CD8-positive, alpha-beta T cell (primary cell): ENCODE measurements at regions of chr1 and their contacts with region 1.

Region 1: DNA sequence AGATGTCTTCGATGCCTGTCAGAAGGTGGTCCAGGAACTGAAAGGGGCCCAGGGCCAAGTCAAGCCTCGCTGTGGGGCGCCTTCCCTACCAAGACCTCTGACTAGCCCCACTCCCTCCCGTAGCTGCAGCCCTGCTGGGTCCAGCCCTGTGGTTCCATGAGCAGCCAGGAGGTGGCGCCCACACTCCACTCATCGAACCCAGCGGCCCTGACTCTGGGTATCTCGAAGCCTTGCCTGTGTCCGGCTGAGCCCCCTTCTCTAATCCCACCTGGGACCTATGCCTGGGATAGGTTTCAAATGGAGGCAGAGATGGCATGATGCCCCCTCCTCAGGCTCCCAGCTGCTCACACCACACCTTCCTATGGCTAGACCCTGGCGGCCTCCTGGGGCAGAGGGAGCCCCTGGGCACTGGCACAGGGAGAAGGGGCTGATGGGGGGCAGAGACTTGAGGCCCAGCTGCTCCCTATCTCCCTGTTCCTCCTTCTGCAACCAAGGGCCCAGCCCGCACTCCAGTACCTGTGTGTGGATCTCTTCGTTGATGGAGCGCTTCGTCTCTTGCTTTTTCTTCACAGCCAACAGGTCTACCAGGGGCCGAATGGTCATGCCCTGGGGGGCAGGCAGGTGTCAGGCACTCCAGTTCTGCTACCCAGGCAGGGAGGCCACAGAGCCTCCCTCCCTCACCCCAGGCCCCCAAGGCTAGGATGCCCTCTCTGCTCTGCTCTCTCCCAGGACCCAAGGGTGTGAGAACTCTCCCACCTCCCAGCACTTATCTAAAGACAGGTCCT is 52.0 kb downstream of the SLC9A1 start:
- DNase-seq: peak; percentile 71 to 90 (median 79)
- ATAC-seq: peak; percentile 97
- H3K4me3 ChIP-seq: no peak overlapping the region
- H3K4me3 Mint-ChIP-seq: no peak overlapping the region
- H3K27ac ChIP-seq: no peak overlapping the region
- H3K27ac Mint-ChIP-seq: no peak overlapping the region
- H3K4me1 ChIP-seq: no peaks in the 10 kb centered on the region
- H3K4me1 Mint-ChIP-seq: peaks cover 8% of the 10 kb centered on the region
- H3K27me3 ChIP-seq: no peaks in the 10 kb centered on the region
- H3K27me3 Mint-ChIP-seq: no peaks in the 10 kb centered on the region
- CTCF ChIP-seq: peak; percentile 89

Region 2: DNA sequence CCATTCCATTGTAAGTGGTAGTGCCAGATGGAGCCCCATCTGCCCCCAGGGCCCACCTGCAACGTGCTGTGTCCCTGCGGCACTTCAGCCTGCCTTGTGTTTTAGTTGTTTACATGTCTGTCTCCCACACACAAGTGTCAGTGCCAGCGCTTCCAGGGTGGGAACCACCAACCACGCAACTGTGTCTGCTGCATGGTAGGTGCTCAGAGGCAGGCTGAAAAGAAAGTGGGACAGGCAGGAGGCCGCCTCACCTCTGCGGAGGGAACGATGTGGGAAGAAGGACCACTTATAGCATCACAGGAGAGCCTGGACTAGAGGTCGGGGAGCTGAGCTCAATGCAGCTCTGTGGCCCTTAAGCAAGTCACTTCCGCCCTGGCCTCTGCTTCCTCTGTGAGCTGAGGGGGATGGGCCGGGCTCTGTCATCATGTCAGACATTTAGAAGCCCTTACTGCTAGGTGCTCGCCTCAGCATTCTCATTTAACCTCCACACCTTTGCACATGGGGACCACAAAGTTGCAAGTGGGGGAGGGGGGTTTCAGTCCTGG is 34.2 kb after region 1 on chr1:
- CTCF ChIA-PET with region 1: interaction called, 19 read pairs
- POLR2A ChIA-PET with region 1: no interaction called
- intact Hi-C with region 1: no loop called
- DNase-seq: peak; percentile 58 to 91 (median 81)
- ATAC-seq: peak; percentile 95
- H3K4me3 ChIP-seq: peak overlapping the region; percentile 41 to 45
- H3K4me3 Mint-ChIP-seq: peak overlapping the region; percentile 87
- H3K27ac ChIP-seq: peak overlapping the region; percentile 72 to 97
- H3K27ac Mint-ChIP-seq: peak overlapping the region; percentile 100
- H3K4me1 ChIP-seq: peaks cover 42% of the 10 kb centered on the region
- H3K4me1 Mint-ChIP-seq: peaks cover 61% of the 10 kb centered on the region
- H3K27me3 ChIP-seq: no peaks in the 10 kb centered on the region
- H3K27me3 Mint-ChIP-seq: no peaks in the 10 kb centered on the region
- CTCF ChIP-seq: no peak

Region 3: DNA sequence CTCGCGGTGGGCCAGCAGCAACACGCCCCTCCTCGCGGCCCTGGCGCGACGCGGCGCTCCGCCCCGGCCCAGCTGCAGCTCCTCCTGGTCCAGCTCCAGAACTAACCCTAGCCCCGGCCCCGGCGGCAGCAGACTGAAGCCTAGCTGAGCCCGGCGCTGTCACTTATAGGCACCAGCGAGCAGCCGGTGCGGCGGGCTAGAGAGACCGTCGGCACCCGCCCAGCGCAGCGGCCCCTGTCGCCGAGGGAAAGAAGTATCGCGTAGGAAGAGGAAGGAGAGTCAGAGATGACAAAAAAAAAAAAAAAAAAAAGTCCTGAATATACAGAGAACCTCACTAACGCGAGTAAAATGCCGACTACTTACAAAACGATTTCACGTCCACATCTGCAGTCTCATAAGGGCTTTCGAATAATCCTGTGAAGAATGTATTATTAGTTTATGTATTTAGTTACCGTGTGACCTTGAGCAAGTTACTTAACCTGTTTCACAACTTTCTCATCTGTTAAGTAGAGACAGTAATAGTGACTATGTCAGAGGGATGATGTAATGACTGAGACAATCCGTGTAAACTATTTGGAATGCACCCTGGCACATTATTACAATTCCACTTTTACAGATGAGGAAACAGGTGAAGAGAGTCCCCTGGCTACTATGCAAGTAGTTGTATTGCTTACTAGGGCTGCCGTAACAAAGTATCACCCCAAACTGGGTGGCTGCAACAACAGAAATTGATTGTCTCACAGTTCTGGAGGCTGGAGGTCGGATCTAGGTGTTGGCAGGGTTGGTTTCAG is 52.3 kb after region 1 on chr1 and contains the start of gene SLC9A1:
- CTCF ChIA-PET with region 1: interaction called, 10 read pairs
- POLR2A ChIA-PET with region 1: interaction called, 4 read pairs
- intact Hi-C with region 1: no loop called
- DNase-seq: peak; percentile 88 to 96 (median 91)
- ATAC-seq: peak; percentile 94
- H3K4me3 ChIP-seq: peak within 1 kb of the TSS; percentile 75 to 83
- H3K4me3 Mint-ChIP-seq: peak within 1 kb of the TSS; percentile 81
- H3K27ac ChIP-seq: peak within 1 kb of the TSS; percentile 92 to 100
- H3K27ac Mint-ChIP-seq: peak within 1 kb of the TSS; percentile 99
- H3K4me1 ChIP-seq: peaks cover 40% of the 10 kb centered on the region
- H3K4me1 Mint-ChIP-seq: peaks cover 45% of the 10 kb centered on the region
- H3K27me3 ChIP-seq: no peaks in the 10 kb centered on the region
- H3K27me3 Mint-ChIP-seq: no peaks in the 10 kb centered on the region
- CTCF ChIP-seq: peak; percentile 82
- total RNA-seq, gene SLC9A1: 17.9 to 18.3 TPM

Region 4: GRCh38 chr1:27192039-27192529 is 89.2 kb after region 1 on chr1:
- CTCF ChIA-PET with region 1: interaction called, 41 read pairs
- POLR2A ChIA-PET with region 1: no interaction called
- intact Hi-C with region 1: no loop called
- DNase-seq: no peak
- ATAC-seq: no peak
- H3K4me3 ChIP-seq: no peak overlapping the region
- H3K4me3 Mint-ChIP-seq: no peak overlapping the region
- H3K27ac ChIP-seq: no peak overlapping the region
- H3K27ac Mint-ChIP-seq: no peak overlapping the region
- H3K4me1 ChIP-seq: no peaks in the 10 kb centered on the region
- H3K4me1 Mint-ChIP-seq: no peaks in the 10 kb centered on the region
- H3K27me3 ChIP-seq: no peaks in the 10 kb centered on the region
- H3K27me3 Mint-ChIP-seq: no peaks in the 10 kb centered on the region
- CTCF ChIP-seq: no peak

Region 5: GRCh38 chr1:27257155-27257554 is 154.3 kb after region 1 on chr1:
- CTCF ChIA-PET with region 1: interaction called, 10 read pairs
- POLR2A ChIA-PET with region 1: no interaction called
- intact Hi-C with region 1: no loop called
- DNase-seq: no peak
- ATAC-seq: no peak
- H3K4me3 ChIP-seq: no peak overlapping the region
- H3K4me3 Mint-ChIP-seq: no peak overlapping the region
- H3K27ac ChIP-seq: no peak overlapping the region
- H3K27ac Mint-ChIP-seq: no peak overlapping the region
- H3K4me1 ChIP-seq: peaks cover 45% of the 10 kb centered on the region
- H3K4me1 Mint-ChIP-seq: peaks cover 44% of the 10 kb centered on the region
- H3K27me3 ChIP-seq: no peaks in the 10 kb centered on the region
- H3K27me3 Mint-ChIP-seq: no peaks in the 10 kb centered on the region
- CTCF ChIP-seq: no peak

Region 6: DNA sequence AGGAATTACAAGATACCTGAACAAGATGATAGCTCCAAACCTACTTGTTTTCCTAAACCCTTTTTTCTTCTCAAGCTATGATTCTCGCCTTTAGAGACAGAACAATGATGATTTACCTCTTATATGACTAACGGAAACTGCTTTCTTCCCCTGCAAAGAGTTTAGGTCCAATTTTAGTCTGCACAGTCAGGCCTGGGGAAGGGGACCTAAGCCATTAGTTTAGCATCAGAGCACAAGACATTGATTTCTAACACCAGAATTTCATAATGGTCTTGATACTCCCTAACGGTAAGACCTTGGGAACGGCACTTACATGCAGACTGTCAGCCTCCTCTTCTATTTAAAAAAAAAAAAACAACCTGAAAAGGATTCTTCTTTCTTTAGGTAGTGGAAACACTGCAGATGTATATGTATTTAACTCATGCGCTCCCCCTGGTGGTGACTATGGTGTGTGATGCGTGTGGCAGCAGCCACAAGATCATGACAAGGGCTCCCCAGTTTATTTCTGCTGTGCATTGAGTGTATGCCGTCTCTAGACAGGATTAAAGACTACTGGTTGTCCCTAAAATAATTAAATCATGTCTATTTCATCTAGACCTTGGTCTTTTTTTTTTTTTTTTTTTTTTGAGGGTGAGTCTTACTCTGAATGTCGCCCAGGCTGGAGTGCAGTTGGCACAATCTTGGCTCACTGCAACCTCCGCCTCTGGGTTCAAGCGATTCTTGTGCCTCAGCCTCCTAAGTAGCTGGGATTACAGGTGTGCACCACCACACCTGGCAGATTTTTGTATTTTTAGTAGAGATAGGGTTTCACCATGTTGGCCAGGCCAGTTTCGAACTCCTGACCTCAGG is 181.8 kb after region 1 on chr1:
- CTCF ChIA-PET with region 1: interaction called, 189 read pairs
- POLR2A ChIA-PET with region 1: interaction called, 4 read pairs
- intact Hi-C with region 1: loop called in 1 of 2 experiments (anchors 1 kb)
- DNase-seq: peak; percentile 79 to 94 (median 88)
- ATAC-seq: peak; percentile 98
- H3K4me3 ChIP-seq: no peak overlapping the region
- H3K4me3 Mint-ChIP-seq: no peak overlapping the region
- H3K27ac ChIP-seq: no peak overlapping the region
- H3K27ac Mint-ChIP-seq: no peak overlapping the region
- H3K4me1 ChIP-seq: no peaks in the 10 kb centered on the region
- H3K4me1 Mint-ChIP-seq: peaks cover 5% of the 10 kb centered on the region
- H3K27me3 ChIP-seq: no peaks in the 10 kb centered on the region
- H3K27me3 Mint-ChIP-seq: no peaks in the 10 kb centered on the region
- CTCF ChIP-seq: peak; percentile 87